HCT116 (cell line): ENCODE measurements at regions of chr12 and their contacts with region 1.

Region 1: DNA sequence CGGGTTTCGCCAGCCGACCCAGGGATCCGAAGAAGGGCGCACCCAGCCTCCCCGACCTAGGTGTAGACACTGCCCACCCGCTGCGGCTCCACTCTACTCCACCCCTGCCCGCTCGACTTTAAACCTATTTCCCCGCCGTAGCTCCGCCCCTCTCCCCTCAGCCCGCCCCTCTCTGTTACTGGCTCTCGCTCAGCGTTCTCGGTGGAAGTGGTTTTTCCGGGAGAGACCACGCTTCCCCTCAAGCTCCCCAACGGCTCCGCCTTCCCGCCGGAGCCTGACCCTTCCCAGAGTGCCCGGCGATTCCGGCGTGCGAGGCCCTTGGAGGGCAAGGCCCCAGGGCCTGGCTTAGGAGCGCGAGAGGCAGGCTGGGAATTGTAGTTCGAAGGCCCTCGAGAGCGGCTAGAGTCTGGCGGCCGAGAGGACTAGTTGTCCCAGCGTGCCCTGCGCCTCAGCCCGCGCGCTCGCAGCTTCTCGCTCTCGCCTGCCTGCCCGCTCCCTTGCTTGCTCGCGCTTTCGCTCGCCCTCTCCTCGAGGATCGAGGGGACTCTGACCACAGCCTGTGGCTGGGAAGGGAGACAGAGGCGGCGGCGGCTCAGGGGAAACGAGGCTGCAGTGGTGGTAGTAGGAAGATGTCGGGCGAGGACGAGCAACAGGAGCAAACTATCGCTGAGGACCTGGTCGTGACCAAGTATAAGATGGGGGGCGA is at the start of gene PA2G4:
- DNase-seq: peak; percentile 98
- ATAC-seq: peak; percentile 95
- H3K4me3 ChIP-seq: peak within 1 kb of the TSS; percentile 88 to 98
- H3K27ac ChIP-seq: peak within 1 kb of the TSS; percentile 94
- H3K4me1 ChIP-seq: peaks cover 9 to 26% of the 10 kb centered on the region in 2 experiments
- H3K27me3 ChIP-seq: no peaks in the 10 kb centered on the region
- CTCF ChIP-seq: no peak
- POLR2A ChIP-seq: peak; percentile 92
- RAD21 ChIP-seq: no peak
- total RNA-seq, gene PA2G4: 302 TPM

Region 2: GRCh38 chr12:55915482-55915859 is 188.8 kb before region 1 on chr12:
- CTCF ChIA-PET with region 1: no interaction called
- POLR2A ChIA-PET with region 1: no interaction called
- RAD21 ChIA-PET with region 1: no interaction called
- intact Hi-C with region 1: no loop called
- DNase-seq: no peak
- ATAC-seq: no peak
- H3K4me3 ChIP-seq: no peak overlapping the region
- H3K27ac ChIP-seq: no peak overlapping the region
- H3K4me1 ChIP-seq: peaks cover 27 to 47% of the 10 kb centered on the region in 2 experiments
- H3K27me3 ChIP-seq: no peaks in the 10 kb centered on the region
- CTCF ChIP-seq: no peak
- POLR2A ChIP-seq: no peak
- RAD21 ChIP-seq: no peak

Region 3: DNA sequence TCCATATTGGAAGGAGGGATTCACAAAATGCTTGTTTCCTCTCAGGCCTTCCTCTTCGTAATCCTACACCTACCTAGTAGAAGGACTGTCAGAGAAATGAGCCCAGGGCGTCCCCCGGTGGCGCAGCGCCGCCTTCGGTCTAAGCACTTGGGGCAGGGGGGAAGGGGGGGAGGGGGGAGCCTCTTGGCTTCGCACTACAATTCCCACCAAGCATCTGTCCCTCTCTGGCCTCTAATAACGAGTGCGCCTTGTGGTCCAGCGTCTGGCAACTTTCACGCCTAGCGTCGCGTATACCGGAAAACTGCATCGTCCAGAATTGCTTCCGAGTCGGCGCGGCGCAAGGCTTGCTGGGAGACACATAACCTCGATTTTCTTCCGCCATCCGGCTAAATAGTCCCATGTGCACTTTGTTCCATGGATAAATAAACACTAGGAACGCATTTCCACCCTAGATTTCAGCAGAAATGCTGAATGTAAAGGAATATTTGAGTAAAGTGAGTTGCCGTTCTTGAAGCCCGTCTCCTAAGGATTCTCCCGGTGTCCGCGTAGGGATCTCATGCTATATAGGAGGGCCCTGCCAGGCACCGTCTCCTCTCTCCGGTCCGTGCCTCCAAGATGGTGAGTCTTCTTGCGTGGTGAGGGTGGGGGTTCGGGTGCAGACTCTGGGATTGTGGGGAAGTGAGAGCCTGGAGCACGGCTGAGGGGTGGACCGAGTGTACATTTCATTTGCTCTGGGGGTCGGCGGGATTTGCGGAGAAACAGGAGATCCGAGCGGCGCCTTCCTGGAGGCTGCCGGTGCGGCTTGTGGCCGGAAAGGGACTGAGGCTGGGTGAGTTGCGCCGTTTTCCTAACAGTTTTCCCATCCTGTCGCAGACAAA is 62.5 kb before region 1 on chr12 and contains the start of gene RPS26:
- CTCF ChIA-PET with region 1: interaction called, 6 read pairs
- POLR2A ChIA-PET with region 1: interaction called, 4 read pairs
- RAD21 ChIA-PET with region 1: no interaction called
- intact Hi-C with region 1: loop called (anchors 2 kb)
- DNase-seq: peak; percentile 100
- ATAC-seq: peak; percentile 88
- H3K4me3 ChIP-seq: peak within 1 kb of the TSS; percentile 90 to 99
- H3K27ac ChIP-seq: peak within 1 kb of the TSS; percentile 90
- H3K4me1 ChIP-seq: peaks cover 16 to 39% of the 10 kb centered on the region in 2 experiments
- H3K27me3 ChIP-seq: no peaks in the 10 kb centered on the region
- CTCF ChIP-seq: peak; percentile 39 to 75 (median 42)
- POLR2A ChIP-seq: peak; percentile 99
- RAD21 ChIP-seq: peak; percentile 81
- total RNA-seq, gene RPS26: 70.2 TPM

Region 4: GRCh38 chr12:56078990-56079664 is 25.1 kb before region 1 on chr12:
- CTCF ChIA-PET with region 1: interaction called, 8 read pairs
- POLR2A ChIA-PET with region 1: interaction called, 18 read pairs
- RAD21 ChIA-PET with region 1: interaction called in 1 of 2 experiments, 3 read pairs
- intact Hi-C with region 1: loop called (anchors 1 kb)
- DNase-seq: peak; percentile 83
- ATAC-seq: peak; percentile 78
- H3K4me3 ChIP-seq: peak overlapping the region; percentile 70 to 90
- H3K27ac ChIP-seq: peak overlapping the region; percentile 93
- H3K4me1 ChIP-seq: peaks cover 17 to 37% of the 10 kb centered on the region in 2 experiments
- H3K27me3 ChIP-seq: no peaks in the 10 kb centered on the region
- CTCF ChIP-seq: peak; percentile 62 to 86 (median 77); a peak in 5 of 6 replicates
- POLR2A ChIP-seq: peak; percentile 34
- RAD21 ChIP-seq: peak; percentile 69

Region 5: DNA sequence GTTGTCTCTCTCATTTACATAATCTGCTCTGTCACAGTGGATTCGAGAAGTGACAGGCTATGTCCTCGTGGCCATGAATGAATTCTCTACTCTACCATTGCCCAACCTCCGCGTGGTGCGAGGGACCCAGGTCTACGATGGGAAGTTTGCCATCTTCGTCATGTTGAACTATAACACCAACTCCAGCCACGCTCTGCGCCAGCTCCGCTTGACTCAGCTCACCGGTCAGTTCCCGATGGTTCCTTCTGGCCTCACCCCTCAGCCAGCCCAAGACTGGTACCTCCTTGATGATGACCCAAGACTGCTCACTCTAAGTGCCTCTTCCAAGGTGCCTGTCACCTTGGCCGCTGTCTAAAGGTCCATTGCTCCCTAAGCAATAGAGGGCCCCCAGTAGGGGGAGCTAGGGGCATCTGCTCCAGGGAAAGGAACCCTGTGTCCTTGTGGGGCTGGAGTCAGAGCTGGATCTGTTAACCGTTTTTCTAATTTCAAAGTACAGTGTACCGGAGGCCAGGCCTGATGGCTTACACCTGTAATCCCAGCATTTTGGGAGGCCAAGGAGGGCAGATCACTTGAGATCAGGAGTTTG is 19.2 kb before region 1 on chr12:
- CTCF ChIA-PET with region 1: interaction called, 13 read pairs
- POLR2A ChIA-PET with region 1: interaction called, 13 read pairs
- RAD21 ChIA-PET with region 1: interaction called in 1 of 2 experiments, 3 read pairs
- intact Hi-C with region 1: no loop called
- DNase-seq: no peak
- ATAC-seq: peak; percentile 47
- H3K4me3 ChIP-seq: no peak overlapping the region
- H3K27ac ChIP-seq: no peak overlapping the region
- H3K4me1 ChIP-seq: peaks cover 15 to 32% of the 10 kb centered on the region in 2 experiments
- H3K27me3 ChIP-seq: no peaks in the 10 kb centered on the region
- CTCF ChIP-seq: peak; percentile 21 to 82 (median 48); a peak in 5 of 6 replicates
- POLR2A ChIP-seq: no peak
- RAD21 ChIP-seq: peak; percentile 47; the same call in 1 of the 2 replicates

Region 6: DNA sequence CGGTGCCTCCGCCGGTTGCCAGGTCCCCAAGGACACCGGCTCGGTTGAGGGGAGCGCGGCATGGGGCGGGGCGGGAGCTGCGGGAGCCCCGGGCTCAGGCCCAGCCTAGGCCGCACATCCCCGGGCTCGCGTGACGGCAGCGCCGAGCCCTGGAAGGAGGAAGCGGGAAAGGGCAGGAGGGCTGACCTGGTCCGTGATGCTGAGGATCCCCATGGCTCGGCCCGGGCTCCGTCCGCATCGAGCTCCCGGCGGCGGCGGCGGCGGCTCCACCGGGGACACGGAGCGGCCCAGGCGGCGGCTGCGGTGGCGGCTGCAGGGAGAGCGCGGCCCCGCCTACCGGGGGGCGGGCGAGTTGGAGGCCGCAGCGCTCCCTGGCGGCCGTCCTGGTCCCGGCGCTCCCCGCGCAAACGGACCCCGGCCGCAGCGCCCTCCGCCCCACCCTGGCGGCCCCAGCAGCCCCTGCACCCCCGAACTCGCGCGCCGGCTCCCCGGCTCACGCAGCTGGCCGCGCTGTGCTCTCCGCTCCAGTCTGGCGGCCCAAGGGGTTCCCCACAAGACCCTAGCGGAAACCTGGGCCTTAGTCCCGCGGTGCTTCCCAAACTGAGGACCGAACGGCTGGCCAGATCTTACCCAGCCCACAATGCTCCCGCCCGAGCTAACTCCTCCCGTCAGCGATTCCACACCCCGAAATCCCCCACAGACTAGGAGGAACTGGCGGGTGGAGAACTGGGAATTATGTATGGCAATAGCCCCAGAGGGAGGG is 154.0 kb after region 1 on chr12 and contains the start of gene ANKRD52:
- CTCF ChIA-PET with region 1: no interaction called
- POLR2A ChIA-PET with region 1: no interaction called
- RAD21 ChIA-PET with region 1: no interaction called
- intact Hi-C with region 1: no loop called
- DNase-seq: no peak
- ATAC-seq: peak; percentile 79
- H3K4me3 ChIP-seq: peak within 1 kb of the TSS; percentile 71 to 89
- H3K27ac ChIP-seq: peak within 1 kb of the TSS; percentile 82
- H3K4me1 ChIP-seq: peaks cover 26 to 52% of the 10 kb centered on the region in 2 experiments
- H3K27me3 ChIP-seq: no peaks in the 10 kb centered on the region
- CTCF ChIP-seq: peak; percentile 5 to 52 (median 44); a peak in 3 of 6 replicates
- POLR2A ChIP-seq: no peak
- RAD21 ChIP-seq: no peak
- total RNA-seq, gene ANKRD52: 56.6 TPM

Region 7: DNA sequence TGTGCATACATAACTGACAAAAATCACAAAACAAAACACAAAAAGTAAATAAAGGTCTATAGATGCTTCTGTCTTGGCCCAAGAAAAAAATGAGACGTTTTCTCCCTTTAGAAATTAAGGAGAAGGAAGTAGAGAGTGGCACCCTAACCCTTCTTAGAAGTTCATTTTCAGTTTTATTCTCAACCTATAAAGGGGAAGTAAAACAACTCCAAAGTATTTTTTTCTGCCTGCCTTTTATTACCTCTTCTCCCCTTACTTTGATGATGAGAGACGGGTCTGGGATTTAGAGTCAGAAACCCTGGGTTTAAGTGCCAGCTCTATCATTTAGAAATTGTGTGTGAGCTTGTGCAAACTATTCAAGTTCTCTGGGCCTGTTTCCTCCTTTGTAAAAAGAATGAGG is 645.1 kb after region 1 on chr12:
- CTCF ChIA-PET with region 1: no interaction called
- POLR2A ChIA-PET with region 1: no interaction called
- RAD21 ChIA-PET with region 1: no interaction called
- intact Hi-C with region 1: no loop called
- DNase-seq: no peak
- ATAC-seq: no peak
- H3K4me3 ChIP-seq: no peak overlapping the region
- H3K27ac ChIP-seq: no peak overlapping the region
- H3K4me1 ChIP-seq: peaks cover 3 to 15% of the 10 kb centered on the region in 2 experiments; a peak in 2 of 4 replicates
- H3K27me3 ChIP-seq: no peaks in the 10 kb centered on the region
- CTCF ChIP-seq: no peak
- POLR2A ChIP-seq: no peak
- RAD21 ChIP-seq: no peak